K562 (cell line): ENCODE measurements at regions of chr11 and their contacts with region 1.

Region 1: DNA sequence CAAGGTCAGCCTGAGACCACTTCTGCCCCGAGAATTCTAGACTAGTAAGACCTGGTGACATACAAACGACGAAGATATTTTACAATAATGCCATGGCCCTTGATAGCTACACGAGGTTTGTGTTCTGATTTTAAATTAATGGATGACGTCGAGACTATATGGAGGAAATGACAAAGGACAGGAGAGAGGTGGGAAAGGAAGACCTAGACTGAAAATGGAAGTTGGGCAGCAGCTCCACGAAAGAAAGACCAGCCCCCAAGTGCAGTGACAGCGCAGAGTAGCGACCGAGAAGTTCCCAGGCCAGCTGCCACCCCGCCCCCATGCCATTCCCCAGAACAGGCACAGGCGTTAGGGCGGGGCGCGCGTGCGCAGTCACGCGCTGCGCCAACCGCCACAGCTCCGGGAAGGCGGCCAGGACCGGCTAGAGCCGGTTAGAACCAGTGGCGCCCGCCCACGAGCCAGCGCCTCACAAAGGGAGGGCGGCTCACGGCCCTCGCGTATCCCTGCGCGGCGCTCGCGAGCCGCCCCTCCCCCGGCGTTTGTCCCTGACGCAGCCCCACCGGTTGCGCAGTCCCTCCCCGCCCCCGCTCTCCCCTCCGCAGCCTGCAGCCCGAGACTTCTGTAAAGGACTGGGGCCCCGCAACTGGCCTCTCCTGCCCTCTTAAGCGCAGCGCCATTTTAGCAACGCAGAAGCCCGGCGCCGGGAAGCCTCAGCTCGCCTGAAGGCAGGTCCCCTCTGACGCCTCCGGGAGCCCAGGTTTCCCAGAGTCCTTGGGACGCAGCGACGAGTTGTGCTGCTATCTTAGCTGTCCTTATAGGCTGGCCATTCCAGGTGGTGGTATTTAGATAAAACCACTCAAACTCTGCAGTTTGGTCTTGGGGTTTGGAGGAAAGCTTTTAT is 1.5 kb upstream of the MALAT1 start:
- DNase-seq: peak; percentile 86 to 100 (median 90)
- ATAC-seq: peak; percentile 76
- H3K4me3 ChIP-seq: peak overlapping the region; percentile 84
- H3K27ac ChIP-seq: peak overlapping the region; percentile 99
- H3K4me1 ChIP-seq: peaks cover 36 to 38% of the 10 kb centered on the region in 2 experiments
- H3K27me3 ChIP-seq: no peaks in the 10 kb centered on the region
- CTCF ChIP-seq: peak in 1 of 3 experiments; percentile 5; a peak in 1 of 6 replicates
- EP300 ChIP-seq: peak; percentile 99
- POLR2A ChIP-seq: peak; percentile 82
- RAD21 ChIP-seq: peak in 1 of 2 experiments; percentile 47

Region 2: GRCh38 chr11:64531906-64532312 is 965.5 kb before region 1 on chr11:
- CTCF ChIA-PET with region 1: no interaction called
- POLR2A ChIA-PET with region 1: no interaction called
- in situ Hi-C with region 1: no loop called
- intact Hi-C with region 1: no loop called
- DNase-seq: no peak
- ATAC-seq: no peak; the same call in 2 of the 3 replicates
- H3K4me3 ChIP-seq: no peak overlapping the region
- H3K27ac ChIP-seq: no peak overlapping the region
- H3K4me1 ChIP-seq: no peaks in the 10 kb centered on the region; a peak in 2 of 5 replicates
- H3K27me3 ChIP-seq: peaks cover 72 to 85% of the 10 kb centered on the region in 2 experiments
- CTCF ChIP-seq: no peak
- EP300 ChIP-seq: no peak
- POLR2A ChIP-seq: no peak
- RAD21 ChIP-seq: no peak

Region 3: GRCh38 chr11:65329944-65330403 is 167.4 kb before region 1 on chr11:
- CTCF ChIA-PET with region 1: no interaction called
- POLR2A ChIA-PET with region 1: interaction called, 119 read pairs
- in situ Hi-C with region 1: no loop called
- intact Hi-C with region 1: no loop called
- DNase-seq: peak; percentile 52 to 96 (median 64)
- ATAC-seq: peak; percentile 65
- H3K4me3 ChIP-seq: no peak overlapping the region
- H3K27ac ChIP-seq: no peak overlapping the region; the same call in 1 of the 3 replicates
- H3K4me1 ChIP-seq: peaks cover 10 to 11% of the 10 kb centered on the region in 2 experiments; a peak in 4 of 5 replicates
- H3K27me3 ChIP-seq: no peaks in the 10 kb centered on the region
- CTCF ChIP-seq: peak; percentile 78 to 82 (median 80)
- EP300 ChIP-seq: no peak
- POLR2A ChIP-seq: no peak
- RAD21 ChIP-seq: peak; percentile 55 to 74

Region 4: GRCh38 chr11:65382033-65382807 is 115.2 kb before region 1 on chr11 and contains the start of gene SLC25A45:
- CTCF ChIA-PET with region 1: no interaction called
- POLR2A ChIA-PET with region 1: interaction called, 253 read pairs
- in situ Hi-C with region 1: no loop called
- intact Hi-C with region 1: no loop called
- DNase-seq: peak; percentile 86 to 96 (median 90)
- ATAC-seq: peak; percentile 93
- H3K4me3 ChIP-seq: peak within 1 kb of the TSS; percentile 37
- H3K27ac ChIP-seq: peak within 1 kb of the TSS; percentile 93
- H3K4me1 ChIP-seq: peaks cover 35 to 81% of the 10 kb centered on the region in 2 experiments
- H3K27me3 ChIP-seq: no peaks in the 10 kb centered on the region
- CTCF ChIP-seq: peak; percentile 84 to 92 (median 91)
- EP300 ChIP-seq: peak; percentile 85
- POLR2A ChIP-seq: peak; percentile 73
- RAD21 ChIP-seq: peak; percentile 93 to 95
- polyA plus RNA-seq, gene SLC25A45: 0.15 to 0.34 TPM

Region 5: DNA sequence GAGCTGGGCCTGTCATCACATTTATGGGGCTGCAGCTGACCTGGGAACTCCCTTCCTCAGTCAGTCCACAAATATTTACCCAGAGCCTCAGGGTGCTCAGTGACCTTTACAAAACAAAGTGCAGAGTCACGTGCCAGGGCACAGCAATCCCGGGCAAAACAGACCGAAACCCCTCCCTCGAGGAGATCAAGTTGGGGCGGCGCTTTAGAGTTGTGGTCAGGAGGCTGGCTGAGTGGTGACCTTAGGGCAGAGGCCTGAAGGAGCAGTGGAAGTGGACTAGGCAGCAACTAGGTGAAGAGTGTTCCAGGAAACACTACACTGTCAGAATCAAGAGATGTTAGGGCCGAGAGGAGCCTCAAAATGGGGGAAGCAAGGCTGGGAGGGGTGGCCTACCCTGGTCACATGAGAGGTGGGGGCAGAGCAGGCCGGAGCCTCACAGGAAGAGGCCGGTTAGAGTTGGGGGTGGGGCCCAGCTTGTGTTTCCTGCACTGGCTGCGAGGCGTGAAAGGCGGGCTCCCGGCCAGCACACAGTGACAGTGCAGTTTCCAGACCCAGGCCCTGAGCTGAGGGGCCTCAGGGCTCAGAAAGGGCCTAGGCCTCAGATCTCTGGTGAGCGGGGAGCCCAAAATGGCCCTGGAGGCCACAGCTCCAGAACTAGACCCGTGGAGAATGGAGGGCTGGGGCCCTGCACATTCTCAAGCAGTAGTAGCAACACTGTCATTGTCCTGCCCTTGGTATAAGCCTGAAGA is 78.5 kb before region 1 on chr11:
- CTCF ChIA-PET with region 1: no interaction called
- POLR2A ChIA-PET with region 1: interaction called, 1,349 read pairs
- in situ Hi-C with region 1: no loop called
- intact Hi-C with region 1: loop called (anchors 1 kb)
- DNase-seq: peak; percentile 85 to 99 (median 89)
- ATAC-seq: peak; percentile 57
- H3K4me3 ChIP-seq: peak overlapping the region; percentile 43
- H3K27ac ChIP-seq: peak overlapping the region; percentile 98
- H3K4me1 ChIP-seq: peaks cover 51 to 75% of the 10 kb centered on the region in 2 experiments
- H3K27me3 ChIP-seq: no peaks in the 10 kb centered on the region
- CTCF ChIP-seq: no peak
- EP300 ChIP-seq: peak; percentile 70
- POLR2A ChIP-seq: peak; percentile 90
- RAD21 ChIP-seq: peak in 1 of 2 experiments; percentile 28; a peak in 1 of 4 replicates

Region 6: DNA sequence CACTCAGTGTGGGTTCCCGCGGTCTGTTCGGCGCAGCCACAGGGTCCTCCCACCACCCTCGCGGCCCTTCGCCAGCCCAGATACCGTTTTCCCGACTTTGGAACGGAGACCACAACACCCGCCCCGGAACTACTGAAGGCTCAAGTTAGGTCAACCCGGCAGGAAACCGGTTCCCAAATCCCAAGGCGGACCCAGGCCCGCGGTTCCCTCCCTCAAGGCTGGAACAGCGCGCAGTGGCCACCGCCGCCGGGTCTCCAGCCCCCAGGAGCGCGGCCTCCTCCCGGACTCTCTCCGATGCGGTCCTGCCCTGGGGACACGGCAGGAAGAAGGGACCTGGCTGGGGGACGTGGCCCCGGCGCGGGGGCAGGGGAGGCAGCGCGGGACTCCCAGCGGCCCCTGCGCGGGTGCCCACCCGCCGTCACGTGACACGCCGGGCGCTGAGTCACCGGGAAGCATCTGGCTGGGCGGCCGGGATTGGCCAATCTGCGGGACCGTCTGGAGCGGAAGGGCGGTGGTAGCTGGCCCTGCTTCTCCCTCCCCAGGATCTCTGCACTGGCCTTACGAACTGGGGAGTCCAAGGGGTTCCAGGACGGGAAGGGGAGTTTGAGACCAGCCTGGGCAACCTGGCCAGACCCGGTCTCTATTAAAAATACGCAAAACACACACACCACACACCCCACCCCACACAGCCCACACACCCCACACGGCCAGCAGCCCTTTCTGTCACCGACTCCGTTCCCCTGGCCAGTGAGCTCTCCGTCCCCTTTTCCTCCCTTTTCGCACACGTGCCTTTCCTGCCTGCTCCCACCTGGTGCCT is 20.0 kb before region 1 on chr11:
- CTCF ChIA-PET with region 1: no interaction called
- POLR2A ChIA-PET with region 1: interaction called, 2,118 read pairs
- in situ Hi-C with region 1: no loop called
- intact Hi-C with region 1: loop called (anchors 1 kb)
- DNase-seq: peak; percentile 95 to 98 (median 96)
- ATAC-seq: peak; percentile 80
- H3K4me3 ChIP-seq: peak overlapping the region; percentile 93
- H3K27ac ChIP-seq: peak overlapping the region; percentile 99
- H3K4me1 ChIP-seq: peaks cover 36 to 59% of the 10 kb centered on the region in 2 experiments
- H3K27me3 ChIP-seq: no peaks in the 10 kb centered on the region
- CTCF ChIP-seq: no peak
- EP300 ChIP-seq: peak; percentile 70
- POLR2A ChIP-seq: peak; percentile 92
- RAD21 ChIP-seq: peak in 1 of 2 experiments; percentile 5; a peak in 1 of 4 replicates

Region 7: GRCh38 chr11:65551572-65552398 is 54.4 kb after region 1 on chr11:
- CTCF ChIA-PET with region 1: no interaction called
- POLR2A ChIA-PET with region 1: interaction called, 16 read pairs
- in situ Hi-C with region 1: no loop called
- intact Hi-C with region 1: no loop called
- DNase-seq: peak in 3 of 4 experiments; percentile 46 to 79 (median 54)
- ATAC-seq: peak; percentile 58
- H3K4me3 ChIP-seq: no peak overlapping the region
- H3K27ac ChIP-seq: peak overlapping the region; percentile 37; the same call in 1 of the 3 replicates
- H3K4me1 ChIP-seq: peaks cover 48 to 84% of the 10 kb centered on the region in 2 experiments
- H3K27me3 ChIP-seq: no peaks in the 10 kb centered on the region
- CTCF ChIP-seq: peak; percentile 65 to 79 (median 66)
- EP300 ChIP-seq: no peak
- POLR2A ChIP-seq: no peak
- RAD21 ChIP-seq: peak in 1 of 2 experiments; percentile 40; a peak in 2 of 4 replicates